ENCODE measurements at regions of chr9 and their contacts with region 1.

Region 1: GRCh38 chr9:121686930-121687541 is 35.6 kb downstream of the DAB2IP start:
- DNase-seq: peak; percentile 71 to 79
- ATAC-seq: peak; percentile 84 to 92
- H3K4me3 ChIP-seq: no peak overlapping the region
- H3K27ac ChIP-seq: no peak overlapping the region
- H3K4me1 ChIP-seq: no peaks in the 10 kb centered on the region
- CTCF ChIP-seq: peak; percentile 84
- EP300 ChIP-seq: no peak
- POLR2A ChIP-seq: no peak
- RAD21 ChIP-seq: peak; percentile 85 to 88

Region 2: GRCh38 chr9:121369595-121370265 is 317.3 kb before region 1 on chr9 and contains the start of gene STOM:
- CTCF ChIA-PET with region 1: no interaction called
- POLR2A ChIA-PET with region 1: no interaction called
- DNase-seq: peak in 1 of 2 experiments; percentile 47
- ATAC-seq: peak; percentile 60 to 77
- H3K4me3 ChIP-seq: peak within 1 kb of the TSS; percentile 74
- H3K27ac ChIP-seq: peak within 1 kb of the TSS; percentile 92 to 94
- H3K4me1 ChIP-seq: peaks cover 85% of the 10 kb centered on the region
- CTCF ChIP-seq: no peak
- EP300 ChIP-seq: no peak
- POLR2A ChIP-seq: peak; percentile 97
- RAD21 ChIP-seq: 0 out of 5 replicates have a peak, but pooled peaks of 1 of the 2 experiments have one; percentile 12
- polyA plus RNA-seq, gene STOM: 234 and 246 TPM in 2 replicates

Region 3: GRCh38 chr9:121621113-121621449 is 66.0 kb before region 1 on chr9:
- CTCF ChIA-PET with region 1: interaction called, 12 read pairs
- POLR2A ChIA-PET with region 1: interaction called, 3 read pairs
- DNase-seq: peak; percentile 56 to 67
- ATAC-seq: peak; percentile 79 to 93
- H3K4me3 ChIP-seq: no peak overlapping the region
- H3K27ac ChIP-seq: no peak overlapping the region
- H3K4me1 ChIP-seq: peaks cover 9% of the 10 kb centered on the region; the same call in 2 of the 3 replicates
- CTCF ChIP-seq: peak; percentile 47
- EP300 ChIP-seq: no peak
- POLR2A ChIP-seq: no peak
- RAD21 ChIP-seq: peak; percentile 53 to 60

Region 4: GRCh38 chr9:121674952-121675351 is 12.1 kb before region 1 on chr9:
- CTCF ChIA-PET with region 1: interaction called, 35 read pairs
- POLR2A ChIA-PET with region 1: no interaction called
- DNase-seq: no peak
- ATAC-seq: peak in 1 of 2 experiments; percentile 41; a peak in 4 of 6 replicates
- H3K4me3 ChIP-seq: no peak overlapping the region
- H3K27ac ChIP-seq: peak overlapping the region in 1 of 2 experiments; percentile 53; a peak in 3 of 6 replicates
- H3K4me1 ChIP-seq: peaks cover 17% of the 10 kb centered on the region; the same call in 2 of the 3 replicates
- CTCF ChIP-seq: no peak
- EP300 ChIP-seq: no peak
- POLR2A ChIP-seq: no peak
- RAD21 ChIP-seq: no peak

Region 5: GRCh38 chr9:121698627-121699570 is 11.9 kb after region 1 on chr9:
- CTCF ChIA-PET with region 1: interaction called, 87 read pairs
- POLR2A ChIA-PET with region 1: no interaction called
- DNase-seq: no peak
- ATAC-seq: peak; percentile 13 to 61; a peak in 5 of 6 replicates
- H3K4me3 ChIP-seq: peak overlapping the region; percentile 55
- H3K27ac ChIP-seq: peak overlapping the region; percentile 66 to 94
- H3K4me1 ChIP-seq: peaks cover 8% of the 10 kb centered on the region; the same call in 1 of the 3 replicates
- CTCF ChIP-seq: no peak
- EP300 ChIP-seq: no peak
- POLR2A ChIP-seq: no peak
- RAD21 ChIP-seq: no peak

Region 6: GRCh38 chr9:121714075-121714894 is 27.2 kb after region 1 on chr9:
- CTCF ChIA-PET with region 1: no interaction called
- POLR2A ChIA-PET with region 1: no interaction called
- DNase-seq: no peak
- ATAC-seq: no peak
- H3K4me3 ChIP-seq: no peak overlapping the region
- H3K27ac ChIP-seq: no peak overlapping the region
- H3K4me1 ChIP-seq: no peaks in the 10 kb centered on the region
- CTCF ChIP-seq: no peak
- EP300 ChIP-seq: no peak
- POLR2A ChIP-seq: no peak
- RAD21 ChIP-seq: no peak

Region 7: GRCh38 chr9:121735065-121735789 is 48.2 kb after region 1 on chr9:
- CTCF ChIA-PET with region 1: interaction called, 10 read pairs
- POLR2A ChIA-PET with region 1: no interaction called
- DNase-seq: peak; percentile 69 to 77
- ATAC-seq: peak; percentile 88 to 94
- H3K4me3 ChIP-seq: no peak overlapping the region; the same call in 2 of the 3 replicates
- H3K27ac ChIP-seq: peak overlapping the region; percentile 8 to 80; a peak in 3 of 6 replicates
- H3K4me1 ChIP-seq: peaks cover 38% of the 10 kb centered on the region
- CTCF ChIP-seq: peak; percentile 53; the same call in 2 of the 3 replicates
- EP300 ChIP-seq: no peak
- POLR2A ChIP-seq: no peak
- RAD21 ChIP-seq: peak; percentile 48 to 61

Region 8: DNA sequence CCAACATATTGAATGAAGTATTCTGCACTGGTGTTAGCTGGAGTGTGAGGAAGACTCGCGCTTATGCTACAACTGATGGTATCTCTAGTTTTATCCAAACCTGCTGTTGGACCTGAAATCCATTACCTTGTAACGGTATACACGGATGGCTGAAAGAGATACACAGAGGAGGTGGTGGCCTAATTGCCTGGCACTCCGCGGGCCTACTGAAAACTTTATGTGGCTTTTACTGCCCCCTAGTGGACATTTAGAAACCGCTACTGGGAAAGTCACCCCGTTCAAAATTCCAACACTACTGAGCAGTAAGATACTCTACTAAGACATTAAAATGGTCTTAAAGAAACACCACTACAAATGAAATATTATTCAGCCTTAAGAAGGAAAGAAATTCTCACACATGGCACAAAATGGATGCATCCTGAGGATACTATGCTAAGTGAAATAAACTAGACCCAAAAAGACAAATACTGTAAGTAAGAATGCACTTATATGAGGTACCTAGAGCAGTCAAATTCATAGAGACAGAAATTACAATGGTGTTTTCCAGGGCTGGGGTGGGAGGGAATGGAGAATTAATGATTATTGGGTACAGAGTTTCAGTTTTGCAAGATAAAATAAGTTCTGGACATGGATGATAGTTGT is 305.7 kb after region 1 on chr9:
- CTCF ChIA-PET with region 1: interaction called, 23 read pairs
- POLR2A ChIA-PET with region 1: no interaction called
- DNase-seq: peak; percentile 69 to 74
- ATAC-seq: peak; percentile 90 to 92
- H3K4me3 ChIP-seq: no peak overlapping the region
- H3K27ac ChIP-seq: no peak overlapping the region
- H3K4me1 ChIP-seq: no peaks in the 10 kb centered on the region
- CTCF ChIP-seq: peak; percentile 89
- EP300 ChIP-seq: no peak
- POLR2A ChIP-seq: no peak
- RAD21 ChIP-seq: peak; percentile 85 to 91

Region 9: DNA sequence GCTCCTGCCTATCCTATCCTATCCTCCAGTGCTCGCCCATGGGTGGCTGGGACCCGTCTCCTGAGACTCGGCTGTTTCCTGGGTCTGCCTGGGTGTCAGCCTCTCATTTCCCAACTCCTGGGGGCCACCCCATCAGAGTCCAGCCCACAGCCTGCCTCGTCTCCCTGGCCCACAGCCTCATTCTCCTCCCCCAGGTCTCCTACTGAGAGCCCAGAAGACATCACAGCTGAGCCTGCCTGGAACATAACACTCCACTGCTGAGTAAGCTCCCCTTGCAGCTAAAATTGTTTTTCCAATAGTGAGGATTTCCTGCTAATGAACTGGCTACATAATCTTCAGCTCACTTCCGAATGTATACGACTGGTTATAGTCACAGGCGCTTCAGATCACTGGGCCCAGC is 310.8 kb after region 1 on chr9:
- CTCF ChIA-PET with region 1: interaction called, 11 read pairs
- POLR2A ChIA-PET with region 1: no interaction called
- DNase-seq: no peak
- ATAC-seq: no peak
- H3K4me3 ChIP-seq: no peak overlapping the region
- H3K27ac ChIP-seq: no peak overlapping the region
- H3K4me1 ChIP-seq: peaks cover 15% of the 10 kb centered on the region
- CTCF ChIP-seq: no peak
- EP300 ChIP-seq: no peak
- POLR2A ChIP-seq: no peak
- RAD21 ChIP-seq: no peak